Endothelial cell of umbilical vein (primary cell): ENCODE measurements at regions of chr6 and their contacts with region 1.

Region 1: GRCh38 chr6:27871924-27872638 is 40.1 kb downstream of the OR2B2 start:
- DNase-seq: peak; percentile 99
- H3K4me3 ChIP-seq: peak overlapping the region; percentile 65 to 96 (median 82)
- H3K27ac ChIP-seq: peak overlapping the region; percentile 80
- H3K4me1 ChIP-seq: peaks cover 16% of the 10 kb centered on the region
- H3K27me3 ChIP-seq: no peaks in the 10 kb centered on the region
- CTCF ChIP-seq: peak in 1 of 2 donors; percentile 37
- POLR2A ChIP-seq: peak; percentile 94

Region 2: DNA sequence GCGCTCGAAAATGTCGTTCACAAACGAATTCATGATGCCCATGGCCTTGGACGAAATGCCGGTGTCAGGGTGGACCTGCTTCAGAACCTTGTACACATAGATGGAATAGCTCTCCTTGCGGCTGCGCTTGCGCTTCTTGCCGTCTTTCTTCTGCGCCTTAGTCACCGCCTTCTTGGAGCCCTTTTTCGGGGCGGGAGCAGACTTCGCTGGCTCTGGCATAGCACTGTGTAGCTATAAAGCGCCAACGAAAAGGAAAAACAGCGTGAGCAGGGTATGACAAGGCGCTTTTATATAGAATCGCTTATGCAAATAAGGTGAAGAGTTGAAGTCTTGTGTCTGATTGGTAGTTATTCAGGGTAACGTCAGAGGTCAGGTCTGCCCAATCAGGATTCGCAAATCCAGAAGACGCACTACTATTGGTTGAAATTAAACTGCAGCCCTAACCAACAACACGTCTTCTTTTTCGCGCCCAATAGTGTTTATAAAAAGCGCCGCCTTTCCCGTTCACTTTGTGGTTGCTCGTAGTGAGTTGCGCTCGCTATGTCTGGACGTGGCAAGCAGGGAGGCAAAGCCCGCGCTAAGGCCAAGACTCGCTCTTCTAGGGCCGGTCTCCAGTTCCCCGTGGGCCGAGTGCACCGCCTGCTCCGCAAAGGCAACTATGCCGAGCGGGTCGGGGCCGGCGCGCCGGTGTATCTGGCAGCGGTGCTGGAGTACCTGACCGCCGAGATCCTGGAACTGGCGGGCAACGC is 739.4 kb before region 1 on chr6:
- CTCF ChIA-PET with region 1: no interaction called
- POLR2A ChIA-PET with region 1: interaction called, 10 read pairs
- dilution Hi-C with region 1: no loop called
- intact Hi-C with region 1: loop called (anchors 2 kb)
- DNase-seq: peak; percentile 100
- H3K4me3 ChIP-seq: peak overlapping the region; percentile 37 to 81 (median 59)
- H3K27ac ChIP-seq: peak overlapping the region; percentile 86
- H3K4me1 ChIP-seq: peaks cover 19% of the 10 kb centered on the region
- H3K27me3 ChIP-seq: no peaks in the 10 kb centered on the region
- CTCF ChIP-seq: no peak
- POLR2A ChIP-seq: peak; percentile 76

Region 3: GRCh38 chr6:27146706-27147505 is 725.2 kb before region 1 on chr6:
- CTCF ChIA-PET with region 1: no interaction called
- POLR2A ChIA-PET with region 1: interaction called, 6 read pairs
- dilution Hi-C with region 1: no loop called
- intact Hi-C with region 1: loop called (anchors 2 kb)
- DNase-seq: peak; percentile 99
- H3K4me3 ChIP-seq: peak overlapping the region in 2 of 3 experiments; percentile 21 to 46
- H3K27ac ChIP-seq: peak overlapping the region; percentile 66
- H3K4me1 ChIP-seq: peaks cover 5% of the 10 kb centered on the region
- H3K27me3 ChIP-seq: peaks cover 0 to 1% of the 10 kb centered on the region in 2 experiments
- CTCF ChIP-seq: no peak
- POLR2A ChIP-seq: peak; percentile 95

Region 4: GRCh38 chr6:27825025-27825793 is 46.9 kb before region 1 on chr6:
- CTCF ChIA-PET with region 1: interaction called, 5 read pairs
- POLR2A ChIA-PET with region 1: interaction called, 16 read pairs
- dilution Hi-C with region 1: loop called (anchors 5 kb)
- intact Hi-C with region 1: loop called (anchors 1 kb)
- DNase-seq: peak; percentile 49
- H3K4me3 ChIP-seq: peak overlapping the region; percentile 44 to 97 (median 73)
- H3K27ac ChIP-seq: peak overlapping the region; percentile 91
- H3K4me1 ChIP-seq: peaks cover 8% of the 10 kb centered on the region
- H3K27me3 ChIP-seq: no peaks in the 10 kb centered on the region
- CTCF ChIP-seq: no peak
- POLR2A ChIP-seq: no peak

Region 5: GRCh38 chr6:27838058-27838944 is 33.8 kb before region 1 on chr6:
- CTCF ChIA-PET with region 1: interaction called, 43 read pairs
- POLR2A ChIA-PET with region 1: interaction called, 129 read pairs
- dilution Hi-C with region 1: no loop called
- intact Hi-C with region 1: loop called (anchors 1 kb)
- DNase-seq: peak; percentile 100
- H3K4me3 ChIP-seq: peak overlapping the region; percentile 25 to 86 (median 59)
- H3K27ac ChIP-seq: peak overlapping the region; percentile 95
- H3K4me1 ChIP-seq: peaks cover 14% of the 10 kb centered on the region
- H3K27me3 ChIP-seq: no peaks in the 10 kb centered on the region
- CTCF ChIP-seq: no peak
- POLR2A ChIP-seq: peak; percentile 87